Mammary epithelial cell (primary cell): ENCODE measurements at regions of chr19 and their contacts with region 1.

Region 1: DNA sequence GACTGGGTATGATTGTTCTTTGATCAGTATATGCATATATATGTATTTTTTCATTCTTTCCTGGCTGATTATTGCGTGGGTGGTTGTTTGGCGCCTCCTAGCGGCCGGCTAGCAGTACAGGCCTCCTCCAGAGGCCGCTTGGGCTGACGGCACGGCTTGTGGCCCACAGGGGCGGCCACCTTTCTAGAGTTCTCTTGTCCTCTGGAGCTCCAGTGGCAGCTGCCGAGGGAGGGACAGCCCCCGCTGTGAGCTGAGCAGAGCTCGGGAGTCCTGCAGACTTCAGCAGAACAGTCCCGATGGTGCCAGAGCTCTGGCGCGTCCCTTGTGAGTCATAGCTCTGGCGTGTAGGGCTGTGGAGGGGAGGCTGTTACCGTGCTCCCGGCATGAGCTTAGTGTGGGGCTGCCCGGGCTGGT is 22.5 kb upstream of the ZNF429 start:
- DNase-seq: no peak
- H3K4me3 ChIP-seq: no peak overlapping the region
- H3K27ac ChIP-seq: no peak overlapping the region
- H3K4me1 ChIP-seq: no peaks in the 10 kb centered on the region
- H3K27me3 ChIP-seq: no peaks in the 10 kb centered on the region
- CTCF ChIP-seq: peak; percentile 14 to 33

Region 2: DNA sequence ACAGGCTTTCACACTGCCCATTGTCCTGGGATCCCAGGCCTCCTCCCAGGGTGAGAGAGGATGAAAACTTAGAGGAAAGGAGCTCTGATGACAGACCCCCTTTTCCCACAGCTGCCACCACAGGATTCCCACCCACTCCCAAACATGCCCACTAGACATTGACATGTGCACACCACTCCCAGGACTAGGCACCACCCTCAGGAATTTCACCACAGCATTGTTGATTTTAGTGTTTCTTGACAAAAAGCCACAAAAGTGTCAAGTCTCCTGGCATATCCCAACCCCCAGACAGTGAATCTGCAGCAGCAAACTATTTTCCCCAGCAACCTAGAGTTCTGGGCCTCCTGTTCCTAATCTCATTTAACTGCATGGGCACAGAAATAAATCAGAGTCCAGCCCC is 390.8 kb before region 1 on chr19:
- CTCF ChIA-PET with region 1: no interaction called
- dilution Hi-C with region 1: no loop called
- in situ Hi-C with region 1: no loop called
- intact Hi-C with region 1: loop called (anchors 10 kb)
- DNase-seq: no peak
- H3K4me3 ChIP-seq: no peak overlapping the region
- H3K27ac ChIP-seq: no peak overlapping the region
- H3K4me1 ChIP-seq: no peaks in the 10 kb centered on the region
- H3K27me3 ChIP-seq: no peaks in the 10 kb centered on the region
- CTCF ChIP-seq: no peak

Region 3: DNA sequence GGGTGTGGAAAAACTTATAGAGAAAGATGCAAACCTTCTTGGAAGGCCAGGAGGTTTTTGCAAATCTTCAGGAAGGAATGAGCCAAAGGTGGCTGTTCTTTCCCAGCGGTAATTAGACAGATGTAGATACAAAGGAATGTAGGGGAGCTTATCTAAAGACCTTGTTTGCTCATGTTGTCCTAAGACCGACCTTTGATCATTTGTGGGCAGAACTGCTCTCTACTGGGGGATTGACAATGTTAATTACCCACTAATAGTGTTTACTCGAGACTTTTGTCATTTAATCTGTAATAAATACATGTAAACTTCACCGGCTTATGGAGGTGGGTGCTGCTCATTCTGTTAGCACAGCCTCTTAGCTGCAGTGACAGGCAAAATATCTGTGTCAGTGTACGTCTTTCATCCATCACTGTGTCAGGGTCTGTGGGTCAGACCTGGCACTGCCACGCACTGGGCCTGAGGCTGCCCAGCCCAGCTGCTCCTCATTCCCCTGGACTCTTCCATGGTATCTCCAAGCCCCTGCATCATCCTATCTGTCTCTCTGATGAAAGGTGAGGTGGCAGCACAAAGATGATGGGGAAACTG is 272.7 kb before region 1 on chr19:
- CTCF ChIA-PET with region 1: no interaction called
- dilution Hi-C with region 1: no loop called
- in situ Hi-C with region 1: no loop called
- intact Hi-C with region 1: no loop called
- DNase-seq: no peak
- H3K4me3 ChIP-seq: no peak overlapping the region
- H3K27ac ChIP-seq: no peak overlapping the region
- H3K4me1 ChIP-seq: no peaks in the 10 kb centered on the region
- H3K27me3 ChIP-seq: no peaks in the 10 kb centered on the region
- CTCF ChIP-seq: no peak

Region 4: DNA sequence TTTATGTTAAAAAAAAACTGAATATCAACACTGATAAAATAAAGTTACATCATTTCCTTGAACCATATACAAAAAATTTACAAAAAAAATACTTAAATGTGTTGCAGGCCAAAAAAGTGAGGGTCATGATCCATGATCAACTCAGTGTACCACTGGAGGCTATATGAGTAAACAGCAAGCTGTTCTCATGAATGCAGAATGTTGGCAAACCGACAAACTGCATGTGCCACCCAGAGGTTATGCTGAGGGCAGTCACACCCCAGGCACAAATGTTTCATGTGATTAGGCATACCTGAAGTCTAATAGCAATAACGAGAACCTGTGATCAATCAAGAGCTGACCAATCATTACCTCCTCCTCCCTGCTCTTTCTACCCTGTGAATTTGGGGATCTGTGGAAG is 249.2 kb before region 1 on chr19:
- CTCF ChIA-PET with region 1: interaction called, 10 read pairs
- dilution Hi-C with region 1: no loop called
- in situ Hi-C with region 1: no loop called
- intact Hi-C with region 1: no loop called
- DNase-seq: peak; percentile 11
- H3K4me3 ChIP-seq: no peak overlapping the region
- H3K27ac ChIP-seq: no peak overlapping the region
- H3K4me1 ChIP-seq: no peaks in the 10 kb centered on the region
- H3K27me3 ChIP-seq: no peaks in the 10 kb centered on the region
- CTCF ChIP-seq: no peak

Region 5: DNA sequence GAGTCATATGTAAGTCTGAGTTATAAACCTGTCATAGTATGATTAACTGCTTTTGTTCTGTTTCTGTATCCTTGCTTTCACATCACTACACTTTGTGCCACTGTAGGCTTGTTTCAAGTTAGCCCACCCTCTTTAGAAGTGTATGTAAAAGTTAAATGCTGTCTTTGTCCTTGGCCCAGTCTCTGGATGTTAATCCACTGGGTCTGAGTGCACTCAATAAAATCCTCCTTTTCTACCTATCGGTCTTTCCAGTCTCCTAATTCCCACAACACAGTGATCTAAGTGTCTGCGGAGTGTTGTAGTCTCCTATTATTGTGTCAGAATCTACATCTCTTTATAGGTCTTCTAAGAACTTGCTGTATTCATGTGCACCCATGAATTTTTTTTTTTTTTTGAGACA is 36.6 kb after region 1 on chr19:
- CTCF ChIA-PET with region 1: no interaction called
- dilution Hi-C with region 1: no loop called
- in situ Hi-C with region 1: no loop called
- intact Hi-C with region 1: no loop called
- DNase-seq: no peak
- H3K4me3 ChIP-seq: no peak overlapping the region
- H3K27ac ChIP-seq: no peak overlapping the region
- H3K4me1 ChIP-seq: no peaks in the 10 kb centered on the region
- H3K27me3 ChIP-seq: no peaks in the 10 kb centered on the region
- CTCF ChIP-seq: no peak

Region 6: DNA sequence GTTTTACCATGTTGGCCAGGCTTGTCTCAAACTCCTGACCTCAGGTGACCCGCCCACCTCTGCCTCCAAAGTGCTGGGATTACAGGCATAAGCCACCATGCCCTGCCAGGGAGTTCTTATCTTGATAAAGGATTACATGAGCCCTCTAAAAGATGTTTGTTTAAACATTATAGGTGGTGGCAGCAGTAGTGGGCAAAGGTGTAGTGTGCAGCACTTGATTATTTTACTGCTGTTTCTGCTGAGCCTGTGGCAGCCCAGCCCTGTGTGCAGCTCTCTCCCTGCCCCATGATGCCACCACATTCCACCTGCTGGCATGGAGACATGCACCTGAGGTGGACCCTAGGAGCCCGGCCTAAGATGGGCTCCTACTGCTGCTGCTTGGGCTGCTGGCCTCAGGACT is 76.6 kb after region 1 on chr19:
- CTCF ChIA-PET with region 1: no interaction called
- dilution Hi-C with region 1: no loop called
- in situ Hi-C with region 1: no loop called
- intact Hi-C with region 1: no loop called
- DNase-seq: no peak
- H3K4me3 ChIP-seq: no peak overlapping the region
- H3K27ac ChIP-seq: no peak overlapping the region
- H3K4me1 ChIP-seq: no peaks in the 10 kb centered on the region
- H3K27me3 ChIP-seq: no peaks in the 10 kb centered on the region
- CTCF ChIP-seq: no peak

Region 7: GRCh38 chr19:21698215-21698614 is 215.3 kb after region 1 on chr19:
- CTCF ChIA-PET with region 1: interaction called, 3 read pairs
- dilution Hi-C with region 1: no loop called
- in situ Hi-C with region 1: no loop called
- intact Hi-C with region 1: loop called (anchors 1 kb)
- DNase-seq: peak; percentile 18
- H3K4me3 ChIP-seq: no peak overlapping the region
- H3K27ac ChIP-seq: no peak overlapping the region
- H3K4me1 ChIP-seq: no peaks in the 10 kb centered on the region
- H3K27me3 ChIP-seq: no peaks in the 10 kb centered on the region
- CTCF ChIP-seq: peak; percentile 24 to 58